Left lung (tissue), 14 donors: ENCODE measurements at regions of chr4 and their contacts with region 1.

Region 1: DNA sequence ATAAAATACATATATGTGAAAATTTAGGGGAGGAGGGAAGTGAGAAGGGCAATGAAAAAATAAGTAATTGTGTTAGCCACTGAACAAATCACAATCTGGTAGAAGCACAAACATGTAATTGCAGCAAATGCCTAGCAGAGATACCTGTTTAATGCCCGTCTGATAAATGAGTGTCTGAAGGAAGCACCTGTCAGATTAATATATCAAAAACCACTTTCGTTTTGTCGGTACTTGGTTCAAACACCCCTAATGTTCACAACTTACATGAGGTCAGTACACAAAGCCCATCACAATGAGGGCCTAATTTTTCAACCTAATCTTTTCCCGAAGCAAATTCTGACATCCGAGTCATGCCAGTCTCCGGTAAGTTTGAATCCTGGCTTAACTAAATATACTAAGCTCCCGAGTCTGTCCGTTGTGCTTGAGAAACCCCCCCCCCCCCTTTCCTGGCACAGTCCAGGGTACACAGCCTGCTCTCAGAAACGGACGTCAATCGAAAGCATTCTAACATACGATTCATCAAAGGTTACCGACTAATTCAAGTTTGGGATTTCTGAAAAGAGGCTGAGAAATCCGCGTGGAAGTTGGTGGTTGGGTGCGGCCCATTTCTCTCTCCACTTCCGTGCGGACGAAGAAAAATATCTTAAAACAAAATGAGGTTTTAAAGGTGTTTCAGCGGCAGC is 758 bp downstream of the SDAD1 start:
- DNase-seq: no peak
- ATAC-seq: peak; percentile 15
- H3K4me3 ChIP-seq: peak overlapping the region; percentile 77 to 78
- H3K27ac ChIP-seq: peak overlapping the region; percentile 33 to 71
- H3K4me1 ChIP-seq: peaks cover 10 to 19% of the 10 kb centered on the region in 2 donors
- H3K27me3 ChIP-seq: peaks cover 0 to 8% of the 10 kb centered on the region in 2 donors
- CTCF ChIP-seq: no peak

Region 2: GRCh38 chr4:76067652-76068286 is 77.8 kb after region 1 on chr4:
- intact Hi-C with region 1: loop called in 1 of 2 experiments (anchors 5 kb)
- DNase-seq: peak in 3 of 4 donors; percentile 50 to 80 (median 51)
- ATAC-seq: peak; percentile 96
- H3K4me3 ChIP-seq: no peak overlapping the region
- H3K27ac ChIP-seq: no peak overlapping the region
- H3K4me1 ChIP-seq: no peaks in the 10 kb centered on the region
- H3K27me3 ChIP-seq: no peaks in the 10 kb centered on the region
- CTCF ChIP-seq: peak; percentile 80 to 81

Region 3: GRCh38 chr4:76156635-76157034 is 166.6 kb after region 1 on chr4:
- intact Hi-C with region 1: no loop called
- DNase-seq: no peak
- ATAC-seq: no peak
- H3K4me3 ChIP-seq: no peak overlapping the region
- H3K27ac ChIP-seq: no peak overlapping the region
- H3K4me1 ChIP-seq: no peaks in the 10 kb centered on the region
- H3K27me3 ChIP-seq: no peaks in the 10 kb centered on the region
- CTCF ChIP-seq: no peak